Cardiac septum (tissue), 1 donor: ENCODE measurements at regions of chr2 and their contacts with region 1.

Region 1: GRCh38 chr2:102806250-102806837 is 44.5 kb downstream of the TMEM182 start:
- DNase-seq: no peak

Region 2: GRCh38 chr2:102753563-102754159 is 52.7 kb before region 1 on chr2:
- intact Hi-C with region 1: loop called (anchors 2 kb)
- DNase-seq: no peak

Region 3: GRCh38 chr2:102871707-102872106 is 65.4 kb after region 1 on chr2:
- intact Hi-C with region 1: no loop called
- DNase-seq: no peak